Lower leg skin (tissue), 4 donors: ENCODE measurements at regions of chr17 and their contacts with region 1.

Region 1: GRCh38 chr17:4908301-4908700 is 5.4 kb upstream of the CHRNE start:
- DNase-seq: no peak
- H3K4me3 ChIP-seq: no peak overlapping the region
- CTCF ChIP-seq: no peak
- POLR2A ChIP-seq: no peak

Region 2: GRCh38 chr17:4997302-4998026 is 89.2 kb after region 1 on chr17 and contains the starts of genes INCA1 and KIF1C:
- intact Hi-C with region 1: loop called (anchors 5 kb)
- DNase-seq: peak; percentile 87 to 98
- H3K4me3 ChIP-seq: peak within 1 kb of the TSS; percentile 87
- CTCF ChIP-seq: no peak
- POLR2A ChIP-seq: no peak
- total RNA-seq, gene INCA1: 0.39 to 2.6 (median 1.4) TPM
- total RNA-seq, gene KIF1C: 87.6 to 140 (median 100) TPM